PC-9 (cell line): ENCODE measurements at regions of chr13 and their contacts with region 1.

Region 1: DNA sequence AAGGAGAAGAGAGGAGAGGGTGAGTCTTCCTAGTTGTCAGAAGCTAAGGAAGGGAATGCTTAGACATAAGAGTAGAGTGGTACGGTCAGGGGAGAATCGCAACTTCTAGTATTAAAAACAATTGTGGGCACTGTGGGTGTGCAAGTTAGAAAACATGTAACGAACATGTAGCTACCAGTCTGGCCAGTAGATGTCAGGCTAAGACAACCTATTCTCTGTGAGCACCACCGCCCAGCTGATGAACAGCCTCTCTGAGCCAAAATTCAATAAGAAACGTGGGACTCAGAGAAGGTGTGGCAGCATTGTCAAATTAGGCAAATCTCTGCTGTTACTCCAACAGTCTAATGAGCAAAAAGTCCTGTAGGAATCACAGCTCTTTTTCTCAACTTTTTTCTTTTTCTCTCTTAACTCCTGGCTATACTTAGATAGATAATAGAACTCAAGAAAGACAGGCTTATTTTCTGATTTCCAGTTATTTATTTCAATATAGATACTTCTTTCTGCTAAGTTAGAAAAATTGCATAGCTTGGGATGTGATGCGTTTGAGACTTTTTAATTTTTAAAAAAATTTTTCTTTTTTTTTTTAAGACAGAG is 186.2 kb downstream of the USP12 start:
- DNase-seq: peak; percentile 51 to 74
- H3K4me3 ChIP-seq: no peak overlapping the region
- H3K27ac ChIP-seq: no peak overlapping the region
- H3K4me1 ChIP-seq: peaks cover 32% of the 10 kb centered on the region
- H3K27me3 ChIP-seq: no peaks in the 10 kb centered on the region
- CTCF ChIP-seq: peak; percentile 89

Region 2: GRCh38 chr13:26946684-26947343 is 38.6 kb before region 1 on chr13:
- CTCF ChIA-PET with region 1: interaction called, 8 read pairs
- POLR2A ChIA-PET with region 1: no interaction called
- intact Hi-C with region 1: loop called (anchors 2 kb)
- DNase-seq: peak in 1 of 2 experiments; percentile 57
- H3K4me3 ChIP-seq: no peak overlapping the region
- H3K27ac ChIP-seq: no peak overlapping the region
- H3K4me1 ChIP-seq: 0 out of 2 replicates have a peak, but pooled peaks cover 6% of the 10 kb centered on the region
- H3K27me3 ChIP-seq: 0 out of 2 replicates have a peak, but pooled peaks cover under 1% of the 10 kb centered on the region
- CTCF ChIP-seq: peak; percentile 86

Region 3: DNA sequence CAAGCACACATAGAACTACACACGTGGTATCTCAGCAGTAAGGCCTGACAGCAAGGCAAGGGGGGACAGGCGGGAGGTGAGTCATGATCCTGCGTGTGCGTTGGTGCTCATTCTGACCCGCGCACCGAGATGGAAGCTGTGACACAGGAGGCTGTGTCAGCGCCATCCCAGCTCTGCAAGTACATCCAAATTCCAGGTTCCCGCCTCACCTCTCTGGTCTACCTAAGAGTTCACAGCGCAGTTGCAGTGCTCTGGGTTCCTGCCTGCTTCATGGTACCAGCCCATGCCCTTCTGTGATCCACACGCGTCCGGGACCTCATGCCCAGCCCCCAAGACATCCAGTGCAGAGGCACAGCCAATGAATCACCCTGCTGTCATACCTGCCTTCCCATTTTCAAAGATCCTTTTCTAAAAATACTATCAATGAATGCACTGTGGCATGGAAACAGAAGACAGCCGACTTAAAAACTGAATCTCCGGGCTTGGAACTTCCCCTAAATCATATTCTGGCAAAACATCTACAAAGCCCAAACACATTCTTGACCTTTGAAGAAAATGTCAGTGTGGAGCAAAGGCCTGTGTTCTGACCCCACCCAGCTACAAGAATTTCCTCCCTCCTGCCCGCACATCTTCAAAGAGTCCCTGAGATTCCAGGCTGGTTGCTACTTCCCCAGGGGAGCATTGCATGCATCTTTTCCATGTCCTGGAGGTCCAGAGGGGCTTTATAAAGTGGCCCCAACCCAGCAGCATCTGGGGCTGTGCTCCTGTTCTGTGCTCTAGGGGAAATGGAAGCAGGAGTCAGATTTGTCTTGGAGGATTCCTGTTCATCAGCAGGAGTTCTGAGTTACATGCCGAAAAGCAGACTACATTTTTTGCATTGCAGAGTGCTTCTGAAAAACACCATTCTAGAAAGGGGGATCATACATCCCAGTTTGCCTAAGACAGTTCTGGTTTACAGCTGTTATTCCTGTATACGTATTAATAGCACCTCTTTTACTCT is 50.9 kb after region 1 on chr13:
- CTCF ChIA-PET with region 1: no interaction called
- POLR2A ChIA-PET with region 1: no interaction called
- intact Hi-C with region 1: loop called (anchors 10 kb)
- DNase-seq: peak; percentile 18 to 42
- H3K4me3 ChIP-seq: no peak overlapping the region
- H3K27ac ChIP-seq: no peak overlapping the region
- H3K4me1 ChIP-seq: peaks cover 26% of the 10 kb centered on the region
- H3K27me3 ChIP-seq: no peaks in the 10 kb centered on the region
- CTCF ChIP-seq: no peak

Region 4: DNA sequence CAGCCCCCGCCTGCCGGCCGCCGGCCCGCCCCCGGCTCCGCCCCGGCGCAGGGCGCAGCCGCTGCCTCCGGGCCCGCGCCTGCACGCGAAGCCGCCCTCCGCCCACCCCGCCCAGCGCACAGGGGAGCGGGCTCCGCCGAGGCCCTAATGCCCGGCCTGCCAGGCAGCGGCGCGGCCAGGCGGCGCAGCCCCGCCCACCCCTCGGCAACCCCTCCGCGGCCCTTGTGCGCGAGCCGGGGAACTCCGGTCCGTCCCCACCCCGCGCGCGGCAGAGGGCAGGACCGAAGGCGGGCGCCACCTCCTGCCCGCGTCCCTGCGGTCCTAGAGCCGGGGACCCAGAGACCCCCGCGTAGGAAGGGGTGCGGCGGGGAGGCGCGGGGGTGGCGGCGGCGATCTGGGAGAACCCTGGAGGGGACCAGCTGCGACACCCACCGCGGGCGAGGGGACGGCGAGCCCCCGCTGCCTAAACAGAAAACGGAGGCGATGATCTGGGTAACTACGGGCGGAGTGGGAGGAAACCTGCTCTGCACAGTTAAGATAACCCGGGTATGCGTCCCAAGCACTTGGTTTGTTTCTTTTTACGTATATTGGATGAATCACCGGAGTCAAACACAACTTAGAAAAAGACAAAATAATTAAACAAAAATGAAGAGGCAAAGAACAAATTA is 186.6 kb after region 1 on chr13:
- CTCF ChIA-PET with region 1: interaction called, 7 read pairs
- POLR2A ChIA-PET with region 1: no interaction called
- intact Hi-C with region 1: loop called (anchors 5 kb)
- DNase-seq: peak; percentile 74 to 93
- H3K4me3 ChIP-seq: peak overlapping the region; percentile 90
- H3K27ac ChIP-seq: peak overlapping the region; percentile 61
- H3K4me1 ChIP-seq: peaks cover 28% of the 10 kb centered on the region
- H3K27me3 ChIP-seq: no peaks in the 10 kb centered on the region
- CTCF ChIP-seq: no peak

Region 5: DNA sequence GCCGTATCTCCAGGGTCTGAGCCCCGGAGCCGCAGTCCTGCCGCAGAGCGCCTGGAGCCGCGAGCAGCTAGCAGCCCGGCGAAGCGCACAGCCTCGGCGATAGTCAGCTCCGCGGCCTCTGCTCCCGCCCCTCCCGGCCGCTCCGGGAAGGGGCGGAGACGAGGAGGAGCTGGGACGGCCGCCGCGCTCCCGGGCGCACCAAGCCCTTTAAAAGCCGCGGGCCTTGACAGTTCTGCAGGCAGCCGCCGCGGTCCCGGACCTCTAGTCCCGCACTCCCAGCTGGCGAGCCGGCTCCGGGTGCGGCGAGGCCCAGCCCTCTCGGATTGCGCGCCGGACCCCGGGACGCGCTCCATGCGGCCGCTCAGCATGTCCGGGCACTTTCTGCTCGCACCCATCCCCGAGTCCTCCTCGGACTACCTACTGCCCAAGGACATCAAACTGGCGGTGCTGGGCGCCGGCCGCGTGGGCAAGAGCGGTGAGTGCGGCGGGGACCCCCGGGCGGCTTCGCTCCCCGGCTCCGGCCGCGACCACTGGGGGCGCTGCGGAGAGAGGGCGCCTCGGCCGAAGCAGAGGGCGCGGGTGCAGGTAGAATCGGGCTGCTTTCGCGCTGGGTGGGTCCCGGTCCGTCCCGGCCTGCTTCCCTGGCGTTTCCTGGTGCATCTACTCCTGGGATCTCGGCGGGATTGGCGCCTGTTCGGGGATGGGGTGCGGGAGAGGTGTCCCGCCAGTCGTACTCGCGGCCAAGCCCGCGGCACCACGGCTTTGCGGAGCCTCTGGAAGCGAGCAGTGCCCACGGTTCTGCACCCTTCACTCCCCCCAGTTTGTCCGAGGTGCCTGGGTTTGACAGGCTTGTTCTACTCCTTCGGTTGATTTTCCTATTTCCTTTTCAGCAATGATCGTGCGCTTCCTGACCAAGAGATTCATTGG is 285.5 kb after region 1 on chr13 and contains the start of gene RASL11A:
- CTCF ChIA-PET with region 1: no interaction called
- POLR2A ChIA-PET with region 1: no interaction called
- intact Hi-C with region 1: no loop called
- DNase-seq: peak; percentile 56 to 68
- H3K4me3 ChIP-seq: peak within 1 kb of the TSS; percentile 90
- H3K27ac ChIP-seq: no peak within 1 kb of the TSS
- H3K4me1 ChIP-seq: peaks cover 32% of the 10 kb centered on the region
- H3K27me3 ChIP-seq: no peaks in the 10 kb centered on the region
- CTCF ChIP-seq: peak; percentile 95
- total RNA-seq, gene RASL11A: 2.0 and 3.8 TPM in 2 replicates

Region 6: GRCh38 chr13:27283906-27284493 is 298.6 kb after region 1 on chr13:
- CTCF ChIA-PET with region 1: interaction called, 3 read pairs
- POLR2A ChIA-PET with region 1: no interaction called
- intact Hi-C with region 1: loop called (anchors 1 kb)
- DNase-seq: peak; percentile 46 to 49
- H3K4me3 ChIP-seq: no peak overlapping the region
- H3K27ac ChIP-seq: no peak overlapping the region
- H3K4me1 ChIP-seq: peaks cover 20% of the 10 kb centered on the region
- H3K27me3 ChIP-seq: no peaks in the 10 kb centered on the region
- CTCF ChIP-seq: peak; percentile 65